Activated B cell treated with CpG ODN at 0.5 μM for 24 hours (primary cell): ENCODE measurements at regions of chr3 and their contacts with region 1.

Region 1: DNA sequence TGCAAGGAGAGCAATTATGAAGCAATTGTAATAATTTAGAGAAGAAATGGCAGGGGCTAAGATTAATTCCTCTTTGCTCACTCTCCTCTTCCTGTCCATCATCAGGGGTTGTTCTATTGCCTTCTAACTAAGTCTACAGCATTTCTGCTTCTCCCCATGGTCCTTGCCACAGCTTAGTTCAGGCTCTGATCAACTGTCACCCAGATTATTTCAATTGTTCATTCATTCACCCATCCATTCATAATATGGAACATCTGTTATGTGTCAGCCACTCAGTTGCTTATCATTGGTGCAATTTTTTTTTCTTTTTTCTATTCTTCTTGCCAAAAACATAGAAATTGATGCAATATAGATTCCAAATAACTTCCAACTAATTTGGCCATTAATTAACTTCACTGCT is 93.2 kb downstream of the CD47 start:
- DNase-seq: no peak
- ATAC-seq: no peak
- H3K4me3 Mint-ChIP-seq: no peak overlapping the region
- H3K27ac Mint-ChIP-seq: no peak overlapping the region
- H3K4me1 Mint-ChIP-seq: peaks cover 9% of the 10 kb centered on the region
- H3K27me3 Mint-ChIP-seq: peaks cover 2% of the 10 kb centered on the region
- CTCF ChIP-seq: no peak

Region 2: DNA sequence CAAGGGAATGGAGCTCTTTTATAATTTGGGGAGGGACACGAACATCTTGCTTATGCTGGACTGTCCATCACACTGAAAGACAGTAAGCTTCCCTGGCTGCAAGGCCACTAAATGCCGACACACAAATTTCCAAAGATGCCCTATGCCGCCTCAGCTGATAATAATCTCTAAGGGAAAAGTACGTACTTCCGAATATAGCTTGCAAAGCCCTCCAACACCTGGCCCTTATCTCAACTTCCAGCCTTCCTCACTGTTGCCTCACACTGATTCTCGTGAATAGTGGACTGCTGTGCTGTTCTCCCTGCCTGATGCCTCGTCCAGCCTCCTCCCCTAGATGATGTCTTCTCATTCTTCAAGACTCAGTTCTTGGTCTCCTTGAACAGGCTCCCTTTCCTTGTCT is 20.9 kb after region 1 on chr3:
- CTCF ChIA-PET with region 1: no interaction called
- POLR2A ChIA-PET with region 1: no interaction called
- intact Hi-C with region 1: loop called (anchors 2 kb)
- DNase-seq: no peak
- ATAC-seq: no peak
- H3K4me3 Mint-ChIP-seq: no peak overlapping the region
- H3K27ac Mint-ChIP-seq: no peak overlapping the region
- H3K4me1 Mint-ChIP-seq: no peaks in the 10 kb centered on the region
- H3K27me3 Mint-ChIP-seq: peaks cover 4% of the 10 kb centered on the region
- CTCF ChIP-seq: no peak